ENCODE measurements at regions of chr13 and their contacts with region 1.

Region 1: GRCh38 chr13:75482070-75482819 is at the start of gene TBC1D4:
- DNase-seq: peak; percentile 97
- H3K4me3 ChIP-seq: peak within 1 kb of the TSS; percentile 74 to 90 (median 86)
- H3K27ac ChIP-seq: peak within 1 kb of the TSS; percentile 63
- H3K4me1 ChIP-seq: peaks cover 9% of the 10 kb centered on the region
- H3K27me3 ChIP-seq: peaks cover 0 to 2% of the 10 kb centered on the region in 2 experiments
- CTCF ChIP-seq: peak; percentile 88 to 95
- POLR2A ChIP-seq: peak; percentile 66
- total RNA-seq, gene TBC1D4: 72.4 and 81.0 TPM in 2 replicates

Region 2: GRCh38 chr13:74825152-74825937 is 656.9 kb before region 1 on chr13:
- CTCF ChIA-PET with region 1: no interaction called
- POLR2A ChIA-PET with region 1: no interaction called
- dilution Hi-C with region 1: no loop called
- intact Hi-C with region 1: no loop called
- DNase-seq: peak; percentile 85
- H3K4me3 ChIP-seq: no peak overlapping the region
- H3K27ac ChIP-seq: peak overlapping the region; percentile 79
- H3K4me1 ChIP-seq: peaks cover 15% of the 10 kb centered on the region
- H3K27me3 ChIP-seq: no peaks in the 10 kb centered on the region
- CTCF ChIP-seq: no peak
- POLR2A ChIP-seq: no peak

Region 3: GRCh38 chr13:75181906-75182305 is 300.3 kb before region 1 on chr13:
- CTCF ChIA-PET with region 1: no interaction called
- POLR2A ChIA-PET with region 1: no interaction called
- dilution Hi-C with region 1: no loop called
- intact Hi-C with region 1: loop called (anchors 1 kb)
- DNase-seq: peak; percentile 96
- H3K4me3 ChIP-seq: no peak overlapping the region
- H3K27ac ChIP-seq: peak overlapping the region; percentile 65
- H3K4me1 ChIP-seq: peaks cover 32% of the 10 kb centered on the region
- H3K27me3 ChIP-seq: no peaks in the 10 kb centered on the region
- CTCF ChIP-seq: no peak
- POLR2A ChIP-seq: peak; percentile 59

Region 4: GRCh38 chr13:75345193-75345592 is 137.1 kb before region 1 on chr13:
- CTCF ChIA-PET with region 1: interaction called, 10 read pairs
- POLR2A ChIA-PET with region 1: no interaction called
- dilution Hi-C with region 1: no loop called
- intact Hi-C with region 1: no loop called
- DNase-seq: peak; percentile 86
- H3K4me3 ChIP-seq: no peak overlapping the region
- H3K27ac ChIP-seq: peak overlapping the region; percentile 83
- H3K4me1 ChIP-seq: peaks cover 21% of the 10 kb centered on the region
- H3K27me3 ChIP-seq: no peaks in the 10 kb centered on the region
- CTCF ChIP-seq: no peak
- POLR2A ChIP-seq: no peak

Region 5: GRCh38 chr13:75365724-75366173 is 116.5 kb before region 1 on chr13:
- CTCF ChIA-PET with region 1: interaction called, 66 read pairs
- POLR2A ChIA-PET with region 1: interaction called, 3 read pairs
- dilution Hi-C with region 1: no loop called
- intact Hi-C with region 1: loop called (anchors 1 kb)
- DNase-seq: peak; percentile 84
- H3K4me3 ChIP-seq: peak overlapping the region; percentile 23 to 96 (median 68)
- H3K27ac ChIP-seq: peak overlapping the region; percentile 98
- H3K4me1 ChIP-seq: peaks cover 49% of the 10 kb centered on the region
- H3K27me3 ChIP-seq: no peaks in the 10 kb centered on the region
- CTCF ChIP-seq: peak; percentile 17 to 19
- POLR2A ChIP-seq: no peak

Region 6: DNA sequence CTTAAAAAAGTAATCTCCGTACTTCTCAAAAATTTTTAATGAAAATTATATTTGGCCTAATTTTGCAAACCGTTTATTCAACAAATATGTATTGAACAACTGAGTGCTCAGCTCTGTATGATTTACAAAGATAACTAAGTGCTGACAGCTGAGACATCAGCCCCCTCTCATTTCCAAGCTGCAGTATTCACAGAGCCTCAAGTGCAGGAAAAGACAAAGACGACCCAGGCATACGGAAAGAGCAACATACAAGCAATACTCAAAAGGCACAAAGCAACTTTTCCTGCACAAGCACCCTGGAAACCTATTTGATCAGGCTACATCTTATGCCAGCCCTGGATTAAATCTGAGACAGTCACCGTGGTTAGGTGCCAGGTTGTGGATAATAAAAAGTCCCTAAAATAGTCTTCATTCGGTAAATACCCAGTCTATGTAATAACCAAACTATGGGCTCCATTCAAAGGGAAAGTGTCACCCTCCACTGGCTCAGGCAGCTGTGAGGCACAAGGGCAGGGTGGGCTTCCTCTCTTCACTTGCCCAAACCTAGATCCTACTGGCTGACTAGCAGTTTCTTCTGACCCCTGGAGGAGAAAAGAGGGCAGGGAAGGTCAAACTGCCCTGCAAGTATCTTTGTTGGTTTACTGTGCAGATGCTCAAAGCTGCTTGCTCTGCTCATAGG is 65.8 kb before region 1 on chr13:
- CTCF ChIA-PET with region 1: no interaction called
- POLR2A ChIA-PET with region 1: no interaction called
- dilution Hi-C with region 1: no loop called
- intact Hi-C with region 1: no loop called
- DNase-seq: no peak
- H3K4me3 ChIP-seq: no peak overlapping the region
- H3K27ac ChIP-seq: no peak overlapping the region
- H3K4me1 ChIP-seq: no peaks in the 10 kb centered on the region
- H3K27me3 ChIP-seq: no peaks in the 10 kb centered on the region
- CTCF ChIP-seq: no peak
- POLR2A ChIP-seq: no peak

Region 7: GRCh38 chr13:75437582-75438318 is 44.5 kb before region 1 on chr13:
- CTCF ChIA-PET with region 1: interaction called, 16 read pairs
- POLR2A ChIA-PET with region 1: no interaction called
- dilution Hi-C with region 1: no loop called
- intact Hi-C with region 1: no loop called
- DNase-seq: no peak
- H3K4me3 ChIP-seq: no peak overlapping the region
- H3K27ac ChIP-seq: no peak overlapping the region
- H3K4me1 ChIP-seq: peaks cover 2% of the 10 kb centered on the region
- H3K27me3 ChIP-seq: no peaks in the 10 kb centered on the region
- CTCF ChIP-seq: no peak
- POLR2A ChIP-seq: no peak

Region 8: GRCh38 chr13:75505327-75505726 is 23.1 kb after region 1 on chr13:
- CTCF ChIA-PET with region 1: interaction called, 10 read pairs
- POLR2A ChIA-PET with region 1: no interaction called
- dilution Hi-C with region 1: no loop called
- intact Hi-C with region 1: no loop called
- DNase-seq: no peak
- H3K4me3 ChIP-seq: no peak overlapping the region
- H3K27ac ChIP-seq: no peak overlapping the region
- H3K4me1 ChIP-seq: peaks cover 2% of the 10 kb centered on the region
- H3K27me3 ChIP-seq: peaks cover 0 to 2% of the 10 kb centered on the region in 2 experiments
- CTCF ChIP-seq: no peak
- POLR2A ChIP-seq: no peak

Region 9: GRCh38 chr13:75549262-75550158 is 67.3 kb after region 1 on chr13 and contains the start of gene UCHL3:
- CTCF ChIA-PET with region 1: interaction called, 15 read pairs
- POLR2A ChIA-PET with region 1: no interaction called
- dilution Hi-C with region 1: no loop called
- intact Hi-C with region 1: loop called (anchors 1 kb)
- DNase-seq: peak; percentile 95
- H3K4me3 ChIP-seq: peak within 1 kb of the TSS; percentile 81 to 92 (median 86)
- H3K27ac ChIP-seq: peak within 1 kb of the TSS; percentile 96
- H3K4me1 ChIP-seq: peaks cover 10% of the 10 kb centered on the region
- H3K27me3 ChIP-seq: no peaks in the 10 kb centered on the region
- CTCF ChIP-seq: peak; percentile 78 to 91
- POLR2A ChIP-seq: peak; percentile 84
- total RNA-seq, gene UCHL3: 46.8 and 49.2 TPM in 2 replicates

Region 10: DNA sequence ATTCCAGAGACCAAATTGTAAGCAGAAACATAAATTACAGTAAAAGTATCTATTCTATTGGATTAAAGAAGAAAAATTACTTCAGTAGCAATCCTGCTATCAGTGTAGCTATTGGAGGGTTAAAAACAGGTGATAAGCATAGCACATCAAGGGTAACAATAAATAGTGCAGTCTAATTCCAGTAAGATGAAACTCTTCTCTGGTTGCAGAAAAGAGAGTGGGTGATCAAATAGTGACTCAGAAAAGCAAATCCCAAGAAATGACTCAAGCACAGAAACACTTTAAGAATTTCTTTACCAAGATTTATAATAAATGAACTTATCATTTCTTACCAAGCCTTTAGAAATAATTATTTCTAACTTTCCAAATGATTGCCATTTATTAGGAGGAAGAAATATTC is 289.6 kb after region 1 on chr13:
- CTCF ChIA-PET with region 1: no interaction called
- POLR2A ChIA-PET with region 1: no interaction called
- dilution Hi-C with region 1: no loop called
- intact Hi-C with region 1: no loop called
- DNase-seq: peak; percentile 44
- H3K4me3 ChIP-seq: no peak overlapping the region
- H3K27ac ChIP-seq: no peak overlapping the region
- H3K4me1 ChIP-seq: peaks cover 18% of the 10 kb centered on the region
- H3K27me3 ChIP-seq: no peaks in the 10 kb centered on the region
- CTCF ChIP-seq: no peak
- POLR2A ChIP-seq: no peak

Region 11: DNA sequence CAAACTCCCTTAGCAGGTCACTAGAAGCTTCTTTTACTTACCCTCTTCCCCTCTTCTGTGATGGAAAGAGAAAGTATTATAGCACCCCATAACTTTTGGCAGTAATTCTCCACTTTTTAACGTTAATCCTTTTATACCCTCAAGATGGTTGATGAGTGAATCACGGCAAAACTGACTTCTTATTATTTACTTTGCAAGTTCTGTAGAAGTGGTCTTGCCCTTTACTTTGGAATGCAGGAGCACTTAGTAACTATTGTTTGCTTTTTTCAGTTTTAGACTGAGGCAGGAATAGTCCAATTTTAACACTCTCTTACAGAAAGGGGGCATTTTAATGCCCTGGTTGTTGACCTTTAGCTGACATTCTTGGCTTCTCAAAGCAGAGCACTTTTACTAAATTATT is 414.0 kb after region 1 on chr13:
- CTCF ChIA-PET with region 1: no interaction called
- POLR2A ChIA-PET with region 1: no interaction called
- dilution Hi-C with region 1: no loop called
- intact Hi-C with region 1: no loop called
- DNase-seq: no peak
- H3K4me3 ChIP-seq: no peak overlapping the region
- H3K27ac ChIP-seq: no peak overlapping the region
- H3K4me1 ChIP-seq: no peaks in the 10 kb centered on the region
- H3K27me3 ChIP-seq: peaks cover 0 to 4% of the 10 kb centered on the region in 2 experiments
- CTCF ChIP-seq: no peak
- POLR2A ChIP-seq: no peak

Measured in endothelial cell of umbilical vein (primary cell).